Transverse colon (tissue), 4 donors: ENCODE measurements at regions of chr1 and their contacts with region 1.

Region 1: DNA sequence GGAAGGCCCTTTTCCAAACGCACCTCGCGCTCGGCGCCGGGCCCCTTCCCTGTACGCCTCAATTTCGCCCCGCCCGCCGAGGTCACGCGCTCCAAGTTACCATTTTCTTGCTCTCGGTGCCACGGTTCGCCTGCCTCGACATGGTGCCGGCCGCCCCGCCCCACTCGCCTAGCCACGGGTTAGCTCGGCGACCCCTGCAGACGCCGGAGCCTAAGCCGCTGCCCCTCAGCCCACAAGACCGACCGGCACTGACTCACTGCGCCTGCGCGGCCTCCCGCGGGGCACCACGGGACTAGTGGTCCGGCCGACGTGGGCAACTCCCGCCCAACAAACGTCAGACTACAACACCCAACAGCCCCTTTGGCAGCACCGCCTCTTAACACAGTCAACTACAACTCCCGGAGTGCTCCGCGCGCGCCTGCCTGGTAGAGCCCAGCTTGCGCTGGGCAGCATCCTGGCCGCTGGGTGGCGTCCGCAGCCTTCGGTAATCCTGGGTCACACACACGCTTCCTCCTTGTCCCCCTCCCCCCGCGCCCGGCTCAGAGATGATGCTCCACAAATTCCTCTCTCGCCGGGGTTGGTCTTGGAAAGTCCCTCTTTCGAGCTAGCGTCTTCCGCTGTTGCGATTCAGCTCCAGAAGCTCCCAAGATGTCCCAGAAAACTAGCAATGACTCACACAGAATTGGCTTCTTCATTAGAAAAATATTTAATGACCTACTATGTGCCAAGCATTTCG is at the start of gene TRAPPC3:
- DNase-seq: peak; percentile 100
- H3K4me3 ChIP-seq: peak within 1 kb of the TSS; percentile 43 to 91 (median 67)
- H3K27ac ChIP-seq: peak within 1 kb of the TSS; percentile 94 to 98 (median 96)
- H3K4me1 ChIP-seq: peaks cover 26 to 44% (median 38%) of the 10 kb centered on the region in 4 donors
- H3K27me3 ChIP-seq: no peaks in the 10 kb centered on the region
- CTCF ChIP-seq: peak; percentile 73 to 98 (median 90)
- EP300 ChIP-seq: no peak
- POLR2A ChIP-seq: peak; percentile 84
- total RNA-seq, gene TRAPPC3: 54.6 to 165 (median 105) TPM

Region 2: DNA sequence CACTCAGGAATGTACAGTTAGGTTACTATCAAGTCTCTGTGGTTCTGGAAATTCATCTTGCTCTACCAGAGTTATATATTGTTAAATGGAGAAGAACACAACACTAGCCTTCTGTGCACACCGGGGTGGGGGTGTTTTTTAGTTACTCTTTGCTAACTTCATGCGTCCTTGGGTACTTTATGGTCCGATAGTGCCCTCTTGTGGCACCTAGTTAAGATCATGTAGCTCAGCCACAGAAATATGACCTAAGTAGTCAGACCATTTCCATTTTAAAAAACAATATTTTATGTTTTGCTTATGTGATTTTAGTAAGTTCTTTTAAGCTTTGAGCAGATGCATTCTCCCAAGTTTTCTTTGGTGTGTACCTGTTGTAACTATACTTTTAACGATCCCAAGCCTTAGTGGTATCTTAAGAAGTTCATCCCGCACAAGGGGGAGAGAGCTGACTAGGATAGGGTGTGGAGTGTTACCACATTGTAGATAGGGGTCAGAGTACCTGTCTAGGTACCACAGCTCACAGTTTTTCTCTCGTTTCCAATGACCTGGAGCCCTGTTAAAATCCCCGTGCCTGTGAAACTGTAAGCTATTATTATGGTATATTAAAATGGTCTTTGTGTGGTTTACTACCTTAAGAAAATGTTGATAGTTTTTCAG is 136.2 kb after region 1 on chr1:
- in situ Hi-C with region 1: loop called in 1 of 4 experiments (anchors 5 kb)
- intact Hi-C with region 1: no loop called
- DNase-seq: peak; percentile 61
- H3K4me3 ChIP-seq: no peak overlapping the region
- H3K27ac ChIP-seq: peak overlapping the region; percentile 5 to 51 (median 30)
- H3K4me1 ChIP-seq: peaks cover 0 to 28% (median under 1%) of the 10 kb centered on the region in 4 donors
- H3K27me3 ChIP-seq: no peaks in the 10 kb centered on the region
- CTCF ChIP-seq: peak; percentile 65 to 72 (median 68)
- EP300 ChIP-seq: no peak
- POLR2A ChIP-seq: no peak

Region 3: DNA sequence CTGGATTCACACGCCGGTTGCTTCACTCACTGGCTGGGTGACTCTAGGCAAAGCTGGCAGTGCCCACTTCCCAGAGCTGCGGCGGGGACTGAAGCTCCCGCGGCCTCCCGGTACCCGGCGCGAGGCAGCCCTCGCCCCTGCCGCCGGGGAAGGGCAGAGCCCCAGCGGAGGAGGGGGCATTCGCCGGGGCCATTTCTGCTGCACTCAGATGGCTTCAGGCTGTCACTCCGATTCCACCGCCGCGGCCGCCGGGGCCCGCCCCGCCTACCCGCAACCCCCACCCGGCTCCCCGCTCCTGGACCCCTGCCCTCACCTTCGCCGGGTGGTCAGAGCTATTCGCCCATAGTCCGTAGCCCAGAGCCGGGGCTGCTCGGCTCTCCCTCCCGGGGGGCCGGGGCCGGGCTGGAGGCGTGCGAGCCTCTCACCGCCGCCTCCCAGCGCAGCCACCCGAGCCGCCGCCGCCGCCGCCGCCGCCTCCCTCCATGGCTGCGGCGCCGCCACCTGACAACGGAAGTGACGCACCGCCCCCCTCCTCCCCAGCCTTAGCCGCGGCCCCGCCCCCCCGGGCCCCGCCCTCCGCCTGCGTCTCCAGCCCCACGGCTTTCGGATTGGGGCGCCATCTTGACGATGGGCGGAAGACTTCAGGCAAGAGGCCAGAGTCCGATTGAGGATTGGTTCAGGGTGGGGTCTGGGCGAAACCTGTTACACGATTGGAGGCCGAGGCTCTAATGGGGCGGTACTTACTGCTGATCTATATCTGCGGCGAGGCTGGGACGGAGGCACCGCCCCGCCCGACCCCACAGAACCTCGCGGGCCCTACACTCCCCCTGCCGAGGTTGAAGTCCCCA is 236.2 kb after region 1 on chr1 and contains the start of gene STK40:
- in situ Hi-C with region 1: no loop called
- intact Hi-C with region 1: loop called (anchors 10 kb)
- DNase-seq: peak; percentile 98
- H3K4me3 ChIP-seq: peak within 1 kb of the TSS; percentile 65 to 90 (median 75)
- H3K27ac ChIP-seq: peak within 1 kb of the TSS; percentile 93 to 97 (median 96)
- H3K4me1 ChIP-seq: peaks cover 12 to 56% (median 39%) of the 10 kb centered on the region in 4 donors
- H3K27me3 ChIP-seq: no peaks in the 10 kb centered on the region
- CTCF ChIP-seq: peak in 1 of 5 experiments; percentile 9
- EP300 ChIP-seq: no peak
- POLR2A ChIP-seq: no peak
- total RNA-seq, gene STK40: 34.0 to 154 (median 44.3) TPM

Region 4: GRCh38 chr1:37186246-37186756 is 1036.9 kb after region 1 on chr1:
- in situ Hi-C with region 1: no loop called
- intact Hi-C with region 1: no loop called
- DNase-seq: no peak
- H3K4me3 ChIP-seq: no peak overlapping the region
- H3K27ac ChIP-seq: no peak overlapping the region
- H3K4me1 ChIP-seq: no peaks in the 10 kb centered on the region
- H3K27me3 ChIP-seq: peaks cover 4% of the 10 kb centered on the region
- CTCF ChIP-seq: no peak
- EP300 ChIP-seq: no peak
- POLR2A ChIP-seq: no peak